CD14-positive monocyte (primary cell): ENCODE measurements at regions of chr17 and their contacts with region 1.

Region 1: GRCh38 chr17:76868176-76868668 is at the start of gene MGAT5B:
- DNase-seq: peak; percentile 45 to 63 (median 60)
- H3K4me3 ChIP-seq: no peak within 1 kb of the TSS
- H3K4me3 Mint-ChIP-seq: peak within 1 kb of the TSS; percentile 66 to 84
- H3K27ac ChIP-seq: no peak within 1 kb of the TSS
- H3K27ac Mint-ChIP-seq: no peak within 1 kb of the TSS
- H3K4me1 ChIP-seq: peaks cover 0 to 3% of the 10 kb centered on the region in 2 donors
- H3K4me1 Mint-ChIP-seq: peaks cover 13% of the 10 kb centered on the region
- H3K27me3 ChIP-seq: peaks cover 19 to 48% of the 10 kb centered on the region in 2 donors
- H3K27me3 Mint-ChIP-seq: peaks cover 40 to 69% (median 49%) of the 10 kb centered on the region in 3 donors
- CTCF ChIP-seq: peak; percentile 84
- polyA plus RNA-seq, gene MGAT5B: not detected

Region 2: DNA sequence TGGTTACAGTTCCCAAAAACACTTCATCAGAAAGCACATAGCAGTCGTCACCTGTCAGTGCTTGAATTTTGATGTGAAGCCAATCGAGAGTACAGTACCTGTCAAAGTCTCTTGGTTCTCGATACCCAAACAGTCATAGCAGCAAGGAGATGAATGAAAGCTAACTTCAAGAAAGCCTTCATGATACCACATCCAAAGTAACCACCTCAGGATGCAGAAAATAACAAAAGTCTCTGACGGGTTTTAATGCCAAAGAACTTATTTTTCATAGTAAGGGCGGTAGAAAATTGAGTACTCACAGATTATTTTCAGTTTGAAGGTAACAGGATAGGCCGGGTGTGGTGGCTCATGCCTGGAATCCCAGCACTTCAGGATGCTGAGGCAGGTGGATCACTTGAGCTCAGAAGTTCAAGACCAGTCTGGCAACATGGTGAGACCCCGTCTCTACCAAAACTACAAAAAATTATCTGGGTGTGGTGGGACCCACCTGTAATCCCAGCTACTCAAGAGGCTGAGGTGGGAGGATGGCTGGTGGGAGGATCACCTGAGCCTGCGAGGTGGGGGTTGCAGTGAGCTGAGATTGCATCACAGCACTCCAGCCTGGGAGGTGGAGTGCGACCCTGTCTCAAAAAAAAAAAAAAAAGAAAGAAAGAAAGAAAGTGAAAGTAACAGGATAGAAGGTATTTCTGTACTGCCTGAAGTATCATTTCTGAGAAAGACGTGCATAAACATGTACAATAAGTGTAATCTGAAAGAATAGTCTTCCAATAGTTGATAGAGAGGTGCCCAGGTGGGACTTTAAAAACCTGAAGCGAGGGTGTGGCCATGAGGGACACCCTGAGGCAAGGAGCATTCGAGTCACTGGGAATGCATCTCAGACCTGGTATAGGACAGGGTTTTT is 114.9 kb before region 1 on chr17:
- intact Hi-C with region 1: no loop called
- DNase-seq: no peak
- H3K4me3 ChIP-seq: no peak overlapping the region
- H3K4me3 Mint-ChIP-seq: no peak overlapping the region
- H3K27ac ChIP-seq: no peak overlapping the region
- H3K27ac Mint-ChIP-seq: peak overlapping the region in 2 of 7 donors; percentile 50 to 69
- H3K4me1 ChIP-seq: no peaks in the 10 kb centered on the region
- H3K4me1 Mint-ChIP-seq: no peaks in the 10 kb centered on the region
- H3K27me3 ChIP-seq: no peaks in the 10 kb centered on the region
- H3K27me3 Mint-ChIP-seq: no peaks in the 10 kb centered on the region
- CTCF ChIP-seq: no peak

Region 3: DNA sequence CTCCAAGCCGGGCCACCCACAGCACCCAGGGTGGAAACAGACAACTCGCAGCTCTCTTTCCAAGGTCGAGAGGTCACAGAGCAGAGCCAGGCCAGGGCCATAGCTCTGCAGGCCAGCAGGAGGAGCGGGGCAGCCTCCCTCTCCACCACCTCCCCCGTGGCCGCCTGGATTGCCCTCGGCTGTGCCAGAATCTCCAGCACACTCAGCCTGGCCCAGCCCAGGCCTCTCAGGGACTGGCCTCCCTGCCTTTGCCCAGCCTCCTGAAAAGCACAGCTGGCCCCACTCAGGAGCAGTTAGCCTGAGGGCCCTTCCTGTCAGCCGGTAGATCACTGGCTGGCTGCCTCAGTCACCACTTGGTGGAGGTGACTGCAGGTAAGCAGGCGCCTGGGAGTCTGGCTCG is 186.7 kb after region 1 on chr17:
- intact Hi-C with region 1: loop called in 1 of 2 experiments (anchors 10 kb)
- DNase-seq: no peak
- H3K4me3 ChIP-seq: no peak overlapping the region
- H3K4me3 Mint-ChIP-seq: no peak overlapping the region
- H3K27ac ChIP-seq: no peak overlapping the region
- H3K27ac Mint-ChIP-seq: no peak overlapping the region
- H3K4me1 ChIP-seq: no peaks in the 10 kb centered on the region
- H3K4me1 Mint-ChIP-seq: no peaks in the 10 kb centered on the region
- H3K27me3 ChIP-seq: no peaks in the 10 kb centered on the region
- H3K27me3 Mint-ChIP-seq: peaks cover 5 to 19% (median 15%) of the 10 kb centered on the region in 3 donors
- CTCF ChIP-seq: no peak

Region 4: DNA sequence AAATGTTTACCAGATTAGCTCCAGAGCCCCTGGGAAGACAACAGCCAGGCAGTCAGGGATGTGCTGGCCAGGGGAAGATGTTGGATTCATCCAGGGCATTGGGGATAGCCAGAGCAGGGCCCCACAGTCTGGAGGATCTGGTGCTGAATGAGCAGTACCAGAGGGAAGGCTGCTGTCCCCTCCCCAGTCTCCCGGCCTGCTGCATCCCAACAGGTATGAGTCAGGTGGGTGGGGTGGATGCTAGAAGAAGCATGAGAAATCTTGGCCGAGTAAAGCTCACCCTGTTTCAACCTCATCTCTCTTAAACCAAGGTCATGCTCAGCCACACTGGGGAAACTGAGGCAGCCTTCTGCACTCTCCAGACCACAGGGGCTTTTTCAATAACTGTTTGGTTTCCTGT is 200.7 kb after region 1 on chr17:
- intact Hi-C with region 1: loop called in 1 of 2 experiments (anchors 5 kb)
- DNase-seq: no peak
- H3K4me3 ChIP-seq: no peak overlapping the region
- H3K4me3 Mint-ChIP-seq: no peak overlapping the region
- H3K27ac ChIP-seq: no peak overlapping the region
- H3K27ac Mint-ChIP-seq: no peak overlapping the region
- H3K4me1 ChIP-seq: no peaks in the 10 kb centered on the region
- H3K4me1 Mint-ChIP-seq: no peaks in the 10 kb centered on the region
- H3K27me3 ChIP-seq: no peaks in the 10 kb centered on the region
- H3K27me3 Mint-ChIP-seq: peaks cover 6 to 13% (median 6%) of the 10 kb centered on the region in 3 donors
- CTCF ChIP-seq: no peak

Region 5: DNA sequence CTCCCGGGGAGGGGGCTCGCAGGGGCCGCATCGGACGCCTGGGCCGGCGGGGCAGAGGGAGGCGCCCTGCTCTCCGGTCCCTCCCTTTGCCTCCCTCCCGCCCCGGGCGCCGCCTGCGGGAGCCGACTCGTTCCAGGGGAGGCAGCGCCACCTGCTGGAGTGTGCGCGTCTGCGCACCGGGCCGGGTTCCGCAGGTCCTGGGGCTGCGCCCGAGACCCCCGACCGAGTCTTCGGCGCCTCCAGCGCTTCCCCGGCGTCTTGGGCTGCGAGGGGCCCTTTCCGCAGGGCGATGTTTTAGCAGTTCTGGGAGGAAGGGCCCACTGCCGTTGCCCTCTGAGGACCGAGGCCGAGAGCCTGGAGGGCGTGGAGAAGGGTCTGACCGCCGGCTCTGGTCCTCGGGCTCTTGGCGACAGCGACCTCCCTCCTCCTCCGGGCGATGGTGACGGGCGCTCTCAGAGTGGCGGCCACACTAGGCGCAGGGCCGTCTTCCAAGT is 378.9 kb after region 1 on chr17:
- intact Hi-C with region 1: loop called in 1 of 2 experiments (anchors 5 kb)
- DNase-seq: peak; percentile 62 to 78 (median 75)
- H3K4me3 ChIP-seq: peak overlapping the region; percentile 11 to 71 (median 25)
- H3K4me3 Mint-ChIP-seq: peak overlapping the region; percentile 24 to 72
- H3K27ac ChIP-seq: no peak overlapping the region
- H3K27ac Mint-ChIP-seq: no peak overlapping the region
- H3K4me1 ChIP-seq: peaks cover 9 to 13% of the 10 kb centered on the region in 2 donors
- H3K4me1 Mint-ChIP-seq: peaks cover 9% of the 10 kb centered on the region
- H3K27me3 ChIP-seq: peaks cover 0 to 4% of the 10 kb centered on the region in 2 donors
- H3K27me3 Mint-ChIP-seq: peaks cover 18 to 27% (median 20%) of the 10 kb centered on the region in 3 donors
- CTCF ChIP-seq: peak; percentile 98